Caco-2 (cell line): ENCODE measurements at regions of chr10 and their contacts with region 1.

Region 1: GRCh38 chr10:114550756-114551635 is 107.1 kb downstream of the ABLIM1 start:
- DNase-seq: no peak
- H3K4me3 ChIP-seq: no peak overlapping the region
- H3K4me3 Mint-ChIP-seq: no peak overlapping the region
- H3K27ac Mint-ChIP-seq: no peak overlapping the region
- H3K4me1 ChIP-seq: no peaks in the 10 kb centered on the region
- H3K4me1 Mint-ChIP-seq: no peaks in the 10 kb centered on the region
- H3K27me3 ChIP-seq: no peaks in the 10 kb centered on the region
- H3K27me3 Mint-ChIP-seq: no peaks in the 10 kb centered on the region
- CTCF ChIP-seq: peak in 1 of 2 experiments; percentile 62

Region 2: DNA sequence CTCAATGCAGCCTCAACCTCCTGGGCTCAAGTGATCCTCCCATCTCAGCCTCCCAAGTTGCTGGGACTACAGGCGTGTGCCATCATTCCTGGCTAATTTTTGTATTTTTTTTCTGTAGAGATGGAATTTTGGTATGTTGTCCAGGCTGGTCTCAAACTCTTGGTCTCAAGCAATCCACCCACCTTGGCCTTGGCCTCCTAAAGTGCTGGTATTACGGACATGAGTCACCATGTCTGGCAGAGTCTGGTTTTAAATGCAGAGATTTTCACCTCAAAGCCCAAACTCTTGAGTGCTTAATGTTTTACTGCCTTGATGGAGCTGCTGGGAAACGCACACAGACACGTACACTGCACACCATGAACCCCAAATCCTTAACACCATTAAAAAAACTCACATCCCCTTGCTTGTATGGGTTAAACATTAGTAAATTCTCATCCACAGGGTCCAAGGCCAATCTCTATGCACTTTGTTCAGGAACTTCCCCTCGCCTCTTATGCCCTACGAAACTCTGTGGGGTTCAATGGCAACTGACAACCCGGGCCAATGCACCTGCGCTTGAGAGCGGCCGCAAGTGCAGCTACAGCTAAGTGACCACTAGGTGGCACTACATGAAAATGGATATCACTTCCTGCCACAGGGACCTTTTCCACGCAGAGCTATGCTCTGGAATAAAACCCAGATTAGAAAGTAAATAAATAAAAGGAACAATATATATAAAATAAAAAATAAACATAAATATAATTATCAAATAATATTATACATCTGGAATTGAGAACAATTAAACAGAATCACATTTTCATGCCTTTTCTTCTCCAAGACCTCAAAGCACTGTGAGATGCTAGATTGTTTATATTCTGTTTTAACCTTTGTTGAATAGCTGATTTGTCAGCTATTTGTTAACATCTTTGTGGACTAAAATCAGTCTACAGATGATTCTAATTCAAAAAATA is 79.8 kb before region 1 on chr10:
- CTCF ChIA-PET with region 1: interaction called, 22 read pairs
- POLR2A ChIA-PET with region 1: no interaction called
- intact Hi-C with region 1: loop called (anchors 1 kb)
- DNase-seq: peak; percentile 54 to 71
- H3K4me3 ChIP-seq: no peak overlapping the region
- H3K4me3 Mint-ChIP-seq: no peak overlapping the region
- H3K27ac Mint-ChIP-seq: no peak overlapping the region
- H3K4me1 ChIP-seq: peaks cover 3% of the 10 kb centered on the region; the same call in 1 of the 2 replicates
- H3K4me1 Mint-ChIP-seq: peaks cover 7% of the 10 kb centered on the region
- H3K27me3 ChIP-seq: no peaks in the 10 kb centered on the region
- H3K27me3 Mint-ChIP-seq: no peaks in the 10 kb centered on the region
- CTCF ChIP-seq: peak; percentile 85 to 89

Region 3: GRCh38 chr10:114631666-114632417 is 80.8 kb after region 1 on chr10:
- CTCF ChIA-PET with region 1: no interaction called
- POLR2A ChIA-PET with region 1: no interaction called
- intact Hi-C with region 1: loop called (anchors 2 kb)
- DNase-seq: peak; percentile 84 to 85
- H3K4me3 ChIP-seq: peak overlapping the region; percentile 54
- H3K4me3 Mint-ChIP-seq: peak overlapping the region; percentile 87
- H3K27ac Mint-ChIP-seq: peak overlapping the region; percentile 85
- H3K4me1 ChIP-seq: peaks cover 52% of the 10 kb centered on the region
- H3K4me1 Mint-ChIP-seq: peaks cover 52% of the 10 kb centered on the region
- H3K27me3 ChIP-seq: no peaks in the 10 kb centered on the region
- H3K27me3 Mint-ChIP-seq: no peaks in the 10 kb centered on the region
- CTCF ChIP-seq: no peak

Region 4: DNA sequence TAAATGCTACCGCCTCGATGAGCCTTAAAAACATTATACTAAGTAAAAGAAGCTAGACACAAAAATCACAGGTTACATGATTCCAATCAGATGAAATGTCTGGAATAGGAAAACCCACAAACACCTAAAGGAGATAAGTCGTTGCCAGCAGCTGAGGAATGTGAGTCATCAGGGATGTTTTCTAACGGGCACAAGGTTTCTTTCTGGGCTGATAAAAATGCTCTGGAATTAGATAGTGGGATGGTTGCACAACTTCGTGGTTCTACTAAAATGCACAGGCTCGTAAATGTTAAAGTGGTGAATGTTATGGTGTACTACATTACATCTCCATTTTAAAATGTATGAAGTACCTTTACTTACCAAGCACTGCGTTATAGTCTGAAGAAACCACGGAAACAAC is 97.4 kb after region 1 on chr10:
- CTCF ChIA-PET with region 1: no interaction called
- POLR2A ChIA-PET with region 1: no interaction called
- intact Hi-C with region 1: no loop called
- DNase-seq: peak in 1 of 2 experiments; percentile 29
- H3K4me3 ChIP-seq: no peak overlapping the region
- H3K4me3 Mint-ChIP-seq: no peak overlapping the region
- H3K27ac Mint-ChIP-seq: no peak overlapping the region
- H3K4me1 ChIP-seq: peaks cover 66% of the 10 kb centered on the region
- H3K4me1 Mint-ChIP-seq: peaks cover 46% of the 10 kb centered on the region
- H3K27me3 ChIP-seq: no peaks in the 10 kb centered on the region
- H3K27me3 Mint-ChIP-seq: no peaks in the 10 kb centered on the region
- CTCF ChIP-seq: no peak

Region 5: DNA sequence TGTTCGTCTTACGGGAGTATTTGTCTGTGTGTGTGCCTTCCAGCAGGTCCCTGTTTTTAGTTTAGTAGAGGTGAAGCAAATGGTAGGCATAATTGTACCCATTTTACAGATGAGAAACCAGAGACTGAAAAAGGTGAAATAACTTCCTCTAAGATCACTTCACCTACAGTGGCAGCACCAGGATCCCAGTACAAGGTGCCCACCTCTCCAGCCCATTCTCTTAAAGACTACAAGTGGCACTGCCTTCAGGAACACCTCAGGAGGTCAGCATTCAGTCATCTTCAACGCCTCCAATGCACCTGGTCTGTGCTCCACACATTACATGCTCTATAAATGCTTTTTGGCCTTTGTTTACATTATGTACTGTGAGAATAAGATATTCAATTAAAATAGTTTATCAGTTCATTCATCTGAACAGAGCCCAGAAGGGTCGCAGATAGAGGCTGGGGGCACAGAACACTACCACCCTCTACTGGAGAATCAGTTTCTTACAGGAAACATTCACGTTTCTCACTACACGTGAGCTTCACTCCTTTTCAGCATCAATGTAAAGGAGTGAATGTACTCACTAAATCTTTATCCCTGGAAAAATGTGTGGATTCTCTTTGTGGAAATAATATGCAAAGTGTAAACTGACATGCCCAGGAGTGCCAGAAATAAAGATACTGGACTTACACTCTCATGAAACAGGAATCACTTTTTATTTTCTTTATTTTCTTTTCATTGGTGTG is 152.5 kb after region 1 on chr10:
- CTCF ChIA-PET with region 1: interaction called, 6 read pairs
- POLR2A ChIA-PET with region 1: no interaction called
- intact Hi-C with region 1: loop called (anchors 1 kb)
- DNase-seq: peak in 1 of 2 experiments; percentile 40
- H3K4me3 ChIP-seq: no peak overlapping the region
- H3K4me3 Mint-ChIP-seq: no peak overlapping the region
- H3K27ac Mint-ChIP-seq: no peak overlapping the region
- H3K4me1 ChIP-seq: no peaks in the 10 kb centered on the region
- H3K4me1 Mint-ChIP-seq: no peaks in the 10 kb centered on the region
- H3K27me3 ChIP-seq: no peaks in the 10 kb centered on the region
- H3K27me3 Mint-ChIP-seq: no peaks in the 10 kb centered on the region
- CTCF ChIP-seq: peak; percentile 73 to 83

Region 6: GRCh38 chr10:115129752-115130151 is 578.8 kb after region 1 on chr10:
- CTCF ChIA-PET with region 1: no interaction called
- POLR2A ChIA-PET with region 1: no interaction called
- intact Hi-C with region 1: loop called (anchors 10 kb)
- DNase-seq: peak in 1 of 2 experiments; percentile 3
- H3K4me3 ChIP-seq: no peak overlapping the region
- H3K4me3 Mint-ChIP-seq: no peak overlapping the region
- H3K27ac Mint-ChIP-seq: no peak overlapping the region
- H3K4me1 ChIP-seq: no peaks in the 10 kb centered on the region
- H3K4me1 Mint-ChIP-seq: no peaks in the 10 kb centered on the region
- H3K27me3 ChIP-seq: no peaks in the 10 kb centered on the region
- H3K27me3 Mint-ChIP-seq: peaks cover 5% of the 10 kb centered on the region
- CTCF ChIP-seq: no peak